Activated naive CD4-positive, alpha-beta T cell treated with anti-CD3 and anti-CD28 coated beads for 36 hours (primary cell): ENCODE measurements at regions of chr7 and their contacts with region 1.

Region 1: DNA sequence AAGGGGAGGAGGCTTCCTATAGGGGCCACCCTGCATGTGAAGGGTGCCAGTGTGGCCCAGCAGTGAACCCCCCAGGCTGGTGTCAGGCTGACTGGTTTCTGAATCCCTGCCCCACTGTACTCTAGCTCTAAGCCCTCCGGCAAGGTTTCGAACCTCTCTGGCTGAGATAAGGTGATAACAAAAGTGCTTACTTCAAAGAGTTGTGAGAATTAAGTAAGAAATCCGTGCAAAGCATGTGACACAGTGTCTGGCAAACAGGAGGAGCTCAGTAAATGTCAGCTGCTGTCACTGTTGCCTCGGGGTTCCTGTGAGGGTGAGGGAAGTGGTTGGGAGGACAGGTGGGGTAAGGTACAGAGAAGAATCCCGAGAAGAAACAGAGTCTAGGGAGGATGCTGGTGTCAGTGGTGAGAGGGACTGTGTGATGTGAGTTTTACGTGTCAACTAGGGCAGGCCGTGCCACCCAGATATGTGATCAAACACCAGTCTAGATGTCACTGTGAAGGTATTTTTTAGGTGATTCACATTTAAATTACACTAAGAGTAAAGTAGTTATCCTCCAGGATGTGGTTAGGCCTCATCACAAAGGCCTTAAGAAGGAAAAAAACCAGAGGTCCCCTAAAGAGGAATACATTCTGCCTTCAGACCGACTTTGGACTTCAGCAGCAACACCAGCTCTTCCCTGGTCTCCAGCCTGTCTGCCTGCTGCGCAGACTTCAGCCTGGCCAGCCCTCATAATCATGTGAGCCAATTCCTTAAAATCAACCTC is 64.4 kb downstream of the BPGM start:
- DNase-seq: peak; percentile 84
- H3K4me3 Mint-ChIP-seq: peak overlapping the region; percentile 42
- H3K27ac Mint-ChIP-seq: peak overlapping the region; percentile 91
- H3K4me1 Mint-ChIP-seq: peaks cover 16% of the 10 kb centered on the region
- H3K27me3 Mint-ChIP-seq: no peaks in the 10 kb centered on the region

Region 2: GRCh38 chr7:134298902-134299683 is 411.9 kb before region 1 on chr7:
- CTCF ChIA-PET with region 1: no interaction called
- intact Hi-C with region 1: no loop called
- DNase-seq: no peak
- H3K4me3 Mint-ChIP-seq: no peak overlapping the region
- H3K27ac Mint-ChIP-seq: no peak overlapping the region
- H3K4me1 Mint-ChIP-seq: no peaks in the 10 kb centered on the region
- H3K27me3 Mint-ChIP-seq: no peaks in the 10 kb centered on the region

Region 3: GRCh38 chr7:134613623-134614347 is 97.3 kb before region 1 on chr7:
- CTCF ChIA-PET with region 1: no interaction called
- intact Hi-C with region 1: no loop called
- DNase-seq: peak; percentile 45
- H3K4me3 Mint-ChIP-seq: no peak overlapping the region
- H3K27ac Mint-ChIP-seq: no peak overlapping the region
- H3K4me1 Mint-ChIP-seq: peaks cover 9% of the 10 kb centered on the region
- H3K27me3 Mint-ChIP-seq: peaks cover 17% of the 10 kb centered on the region

Region 4: DNA sequence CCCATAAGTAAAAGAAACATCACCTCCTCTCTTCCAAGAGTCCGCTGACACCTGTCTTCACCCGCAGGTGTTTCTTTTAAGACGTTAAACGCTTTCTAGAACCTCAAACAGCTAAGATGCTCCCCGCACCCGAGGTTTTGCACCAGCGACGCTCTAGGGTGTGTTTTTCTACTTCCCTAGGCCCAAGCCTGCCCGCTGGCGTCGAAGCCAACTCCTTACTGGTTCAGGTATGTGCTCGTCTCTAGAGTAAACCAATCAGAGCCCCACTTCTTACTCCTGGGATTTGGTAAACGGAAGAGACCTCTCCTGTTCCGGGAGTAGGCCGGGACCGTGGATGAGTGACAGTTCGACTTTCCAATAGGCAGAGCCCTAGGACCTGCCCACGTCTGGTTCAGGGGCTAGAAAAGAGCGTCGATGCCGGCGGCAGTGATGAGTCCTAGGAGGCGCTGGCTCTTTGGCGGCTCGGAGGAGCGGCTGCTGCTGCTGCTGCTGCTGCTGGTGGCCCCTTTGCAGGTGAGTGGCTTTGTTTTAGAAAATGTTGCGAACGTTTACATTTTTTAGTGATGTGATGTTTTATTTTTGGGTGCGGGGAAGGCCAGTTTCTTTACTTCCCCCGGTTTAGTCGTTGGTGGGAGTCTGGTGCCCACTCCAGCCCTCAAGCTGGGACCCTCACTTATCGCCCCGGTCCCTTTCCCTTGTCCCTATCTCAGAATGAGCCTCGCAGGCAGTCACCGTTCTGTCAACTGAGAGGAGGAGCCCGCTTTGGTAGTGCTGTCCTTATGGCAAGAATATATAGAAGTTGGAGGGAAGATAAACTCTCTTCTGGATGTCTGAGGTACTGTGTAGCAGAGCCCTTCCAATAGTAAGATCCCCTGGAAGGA is 64.4 kb before region 1 on chr7 and contains the start of gene BPGM:
- CTCF ChIA-PET with region 1: no interaction called
- intact Hi-C with region 1: loop called (anchors 1 kb)
- DNase-seq: peak; percentile 99
- H3K4me3 Mint-ChIP-seq: no peak within 1 kb of the TSS
- H3K27ac Mint-ChIP-seq: no peak within 1 kb of the TSS
- H3K4me1 Mint-ChIP-seq: peaks cover 37% of the 10 kb centered on the region
- H3K27me3 Mint-ChIP-seq: no peaks in the 10 kb centered on the region
- total RNA-seq, gene BPGM: 13.9 to 14.2 TPM

Region 5: GRCh38 chr7:134690016-134690415 is 21.0 kb before region 1 on chr7:
- CTCF ChIA-PET with region 1: interaction called, 3 read pairs
- intact Hi-C with region 1: loop called (anchors 1 kb)
- DNase-seq: peak; percentile 13
- H3K4me3 Mint-ChIP-seq: no peak overlapping the region
- H3K27ac Mint-ChIP-seq: no peak overlapping the region
- H3K4me1 Mint-ChIP-seq: peaks cover 14% of the 10 kb centered on the region
- H3K27me3 Mint-ChIP-seq: no peaks in the 10 kb centered on the region

Region 6: GRCh38 chr7:134750083-134751062 is 39.3 kb after region 1 on chr7:
- CTCF ChIA-PET with region 1: interaction called, 3 read pairs
- intact Hi-C with region 1: loop called (anchors 1 kb)
- DNase-seq: peak; percentile 86
- H3K4me3 Mint-ChIP-seq: no peak overlapping the region
- H3K27ac Mint-ChIP-seq: no peak overlapping the region
- H3K4me1 Mint-ChIP-seq: peaks cover 3% of the 10 kb centered on the region
- H3K27me3 Mint-ChIP-seq: no peaks in the 10 kb centered on the region

Region 7: GRCh38 chr7:134865001-134865845 is 154.2 kb after region 1 on chr7:
- CTCF ChIA-PET with region 1: no interaction called
- intact Hi-C with region 1: loop called (anchors 1 kb)
- DNase-seq: peak; percentile 62
- H3K4me3 Mint-ChIP-seq: peak overlapping the region; percentile 65
- H3K27ac Mint-ChIP-seq: peak overlapping the region; percentile 77
- H3K4me1 Mint-ChIP-seq: peaks cover 39% of the 10 kb centered on the region
- H3K27me3 Mint-ChIP-seq: no peaks in the 10 kb centered on the region